CD4-positive, alpha-beta memory T cell (primary cell): ENCODE measurements at regions of chr18 and their contacts with region 1.

Region 1: GRCh38 chr18:57881818-57882413 is 78.8 kb upstream of the ATP8B1 start:
- DNase-seq: peak in 4 of 5 donors; percentile 19 to 38 (median 30)
- H3K4me3 ChIP-seq: no peak overlapping the region
- H3K4me3 Mint-ChIP-seq: no peak overlapping the region
- H3K27ac ChIP-seq: no peak overlapping the region
- H3K27ac Mint-ChIP-seq: no peak overlapping the region
- H3K4me1 ChIP-seq: no peaks in the 10 kb centered on the region
- H3K4me1 Mint-ChIP-seq: peaks cover 0 to 3% (median 0%) of the 10 kb centered on the region in 4 donors
- H3K27me3 ChIP-seq: no peaks in the 10 kb centered on the region
- H3K27me3 Mint-ChIP-seq: peaks cover 2 to 11% of the 10 kb centered on the region in 2 donors

Region 2: DNA sequence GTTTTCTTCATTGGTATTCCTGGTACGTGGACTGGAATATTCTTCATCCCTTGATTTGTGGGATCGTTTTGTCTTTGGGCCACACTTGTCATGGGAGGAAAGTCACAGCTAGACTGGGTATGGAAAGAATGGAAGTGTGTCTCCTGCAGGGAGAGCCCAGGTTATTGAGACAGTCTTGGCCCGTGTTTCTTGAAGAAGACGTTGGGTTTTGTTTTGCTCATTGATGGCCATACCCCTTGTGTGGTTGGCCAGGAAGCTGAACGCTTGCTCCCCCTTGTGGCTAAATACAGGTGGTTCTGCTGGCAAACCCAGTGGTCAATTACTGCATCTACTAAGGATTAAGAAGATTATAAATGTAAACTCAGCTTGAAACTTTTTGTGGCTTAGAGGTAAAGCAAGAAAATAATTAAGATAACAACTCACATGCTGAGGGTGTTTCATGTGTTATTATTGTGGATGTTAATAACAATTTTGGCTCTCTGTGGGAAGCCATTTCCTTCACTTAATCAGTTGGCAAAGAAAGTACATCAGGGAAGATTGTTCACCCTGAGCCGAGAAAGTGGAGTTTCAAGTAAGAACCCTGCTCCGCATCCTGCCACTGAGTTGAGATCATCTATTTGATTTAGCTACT is 253.9 kb after region 1 on chr18:
- CTCF ChIA-PET with region 1: interaction called, 4 read pairs
- POLR2A ChIA-PET with region 1: no interaction called
- intact Hi-C with region 1: loop called (anchors 5 kb)
- DNase-seq: peak in 4 of 5 donors; percentile 24 to 33 (median 31)
- H3K4me3 ChIP-seq: no peak overlapping the region
- H3K4me3 Mint-ChIP-seq: peak overlapping the region in 3 of 8 donors; percentile 22 to 69 (median 38)
- H3K27ac ChIP-seq: no peak overlapping the region
- H3K27ac Mint-ChIP-seq: no peak overlapping the region
- H3K4me1 ChIP-seq: peaks cover 7% of the 10 kb centered on the region
- H3K4me1 Mint-ChIP-seq: peaks cover 5 to 17% (median 12%) of the 10 kb centered on the region in 4 donors
- H3K27me3 ChIP-seq: no peaks in the 10 kb centered on the region
- H3K27me3 Mint-ChIP-seq: peaks cover 10 to 14% of the 10 kb centered on the region in 2 donors